CD8-positive, alpha-beta T cell (primary cell): ENCODE measurements at regions of chr2 and their contacts with region 1.

Region 1: DNA sequence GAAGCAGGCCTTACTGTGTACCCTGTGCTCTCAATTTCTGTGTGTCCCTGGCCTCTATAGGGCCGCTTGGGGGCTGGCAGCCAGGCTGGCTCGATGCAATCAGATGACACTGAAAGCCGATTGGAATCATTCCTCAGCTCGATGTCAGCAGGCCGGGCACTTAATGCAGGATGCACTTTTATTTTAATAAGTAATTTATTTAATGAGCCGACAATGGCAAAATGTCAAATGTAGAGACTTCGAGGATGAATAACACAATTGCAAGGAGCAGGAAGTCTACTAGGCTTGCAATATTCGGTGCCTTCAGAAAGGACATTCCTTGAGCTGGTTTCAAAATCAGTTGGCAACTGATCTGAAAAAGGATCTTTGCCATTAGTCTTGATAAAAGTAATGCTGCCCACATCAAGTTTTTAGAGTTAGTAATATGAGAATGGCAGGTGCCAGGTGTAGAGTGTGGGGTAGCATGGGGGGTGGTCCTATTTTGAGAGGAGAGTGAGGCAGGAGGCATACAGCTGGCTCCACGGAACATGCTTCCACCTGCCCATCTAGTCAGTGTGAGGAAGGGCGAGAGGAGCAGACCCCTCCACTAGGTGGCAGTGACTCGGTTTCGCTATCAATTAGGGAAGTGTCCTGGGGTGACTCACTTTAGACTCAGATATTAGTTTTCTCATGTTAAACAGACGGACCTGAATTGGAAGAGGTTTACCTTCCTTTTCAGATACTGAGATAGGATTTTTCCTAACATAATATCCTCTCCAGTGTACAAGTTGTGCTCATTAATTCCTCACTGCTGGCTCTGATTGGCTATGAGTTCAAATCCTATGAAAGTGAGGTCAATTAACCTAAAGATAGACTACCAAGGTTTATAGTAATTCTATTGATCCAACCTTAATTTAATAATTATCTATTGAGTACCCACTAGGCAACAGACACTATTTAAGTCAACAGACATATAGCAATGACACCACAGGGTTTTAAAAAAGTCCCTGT is 80.9 kb downstream of the NABP1 start:
- DNase-seq: peak; percentile 6 to 67 (median 45)
- ATAC-seq: peak; percentile 74
- H3K4me3 ChIP-seq: no peak overlapping the region
- H3K4me3 Mint-ChIP-seq: no peak overlapping the region
- H3K27ac ChIP-seq: no peak overlapping the region
- H3K27ac Mint-ChIP-seq: no peak overlapping the region
- H3K4me1 ChIP-seq: peaks cover 4% of the 10 kb centered on the region
- H3K4me1 Mint-ChIP-seq: peaks cover 3% of the 10 kb centered on the region
- H3K27me3 ChIP-seq: no peaks in the 10 kb centered on the region
- H3K27me3 Mint-ChIP-seq: peaks cover 15% of the 10 kb centered on the region
- CTCF ChIP-seq: peak; percentile 46

Region 2: GRCh38 chr2:191748059-191748461 is 10.8 kb before region 1 on chr2:
- CTCF ChIA-PET with region 1: interaction called, 14 read pairs
- POLR2A ChIA-PET with region 1: no interaction called
- intact Hi-C with region 1: no loop called
- DNase-seq: no peak
- ATAC-seq: no peak
- H3K4me3 ChIP-seq: no peak overlapping the region
- H3K4me3 Mint-ChIP-seq: no peak overlapping the region
- H3K27ac ChIP-seq: no peak overlapping the region
- H3K27ac Mint-ChIP-seq: no peak overlapping the region
- H3K4me1 ChIP-seq: no peaks in the 10 kb centered on the region
- H3K4me1 Mint-ChIP-seq: no peaks in the 10 kb centered on the region
- H3K27me3 ChIP-seq: peaks cover 0 to 2% of the 10 kb centered on the region in 2 experiments
- H3K27me3 Mint-ChIP-seq: peaks cover 35% of the 10 kb centered on the region
- CTCF ChIP-seq: no peak

Region 3: DNA sequence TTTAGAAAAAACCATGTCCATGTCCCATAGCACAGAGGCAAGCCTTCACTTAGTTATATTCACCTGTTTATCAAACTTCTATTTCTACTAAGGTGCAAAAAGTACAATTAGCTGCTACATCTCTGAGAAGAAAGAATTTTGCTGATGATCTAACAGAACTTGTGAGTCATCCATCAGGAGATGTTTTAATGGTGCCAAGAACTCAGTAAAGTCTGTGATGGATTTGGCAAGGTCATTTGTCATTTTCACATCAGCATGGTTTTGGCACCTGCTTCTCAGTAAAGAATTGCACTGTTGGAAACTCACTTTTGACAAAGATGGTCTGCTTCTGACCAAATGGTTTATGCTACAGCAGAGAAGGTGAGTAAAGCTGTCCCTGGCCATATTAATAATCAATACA is 631.6 kb after region 1 on chr2:
- CTCF ChIA-PET with region 1: no interaction called
- POLR2A ChIA-PET with region 1: no interaction called
- intact Hi-C with region 1: no loop called
- DNase-seq: no peak
- ATAC-seq: no peak
- H3K4me3 ChIP-seq: no peak overlapping the region
- H3K4me3 Mint-ChIP-seq: no peak overlapping the region
- H3K27ac ChIP-seq: no peak overlapping the region
- H3K27ac Mint-ChIP-seq: no peak overlapping the region
- H3K4me1 ChIP-seq: no peaks in the 10 kb centered on the region
- H3K4me1 Mint-ChIP-seq: no peaks in the 10 kb centered on the region
- H3K27me3 ChIP-seq: no peaks in the 10 kb centered on the region
- H3K27me3 Mint-ChIP-seq: no peaks in the 10 kb centered on the region
- CTCF ChIP-seq: no peak